SK-N-SH (cell line): ENCODE measurements at regions of chr2 and their contacts with region 1.

Region 1: GRCh38 chr2:219459460-219460311 is 25.0 kb downstream of the SPEG start:
- DNase-seq: peak; percentile 88
- H3K4me3 ChIP-seq: no peak overlapping the region
- H3K27ac ChIP-seq: peak overlapping the region; percentile 29 to 92; a peak in 3 of 4 replicates
- H3K4me1 ChIP-seq: peaks cover 17 to 27% of the 10 kb centered on the region in 2 experiments
- H3K27me3 ChIP-seq: no peaks in the 10 kb centered on the region
- CTCF ChIP-seq: peak; percentile 87
- EP300 ChIP-seq: no peak
- RAD21 ChIP-seq: peak; percentile 77

Region 2: DNA sequence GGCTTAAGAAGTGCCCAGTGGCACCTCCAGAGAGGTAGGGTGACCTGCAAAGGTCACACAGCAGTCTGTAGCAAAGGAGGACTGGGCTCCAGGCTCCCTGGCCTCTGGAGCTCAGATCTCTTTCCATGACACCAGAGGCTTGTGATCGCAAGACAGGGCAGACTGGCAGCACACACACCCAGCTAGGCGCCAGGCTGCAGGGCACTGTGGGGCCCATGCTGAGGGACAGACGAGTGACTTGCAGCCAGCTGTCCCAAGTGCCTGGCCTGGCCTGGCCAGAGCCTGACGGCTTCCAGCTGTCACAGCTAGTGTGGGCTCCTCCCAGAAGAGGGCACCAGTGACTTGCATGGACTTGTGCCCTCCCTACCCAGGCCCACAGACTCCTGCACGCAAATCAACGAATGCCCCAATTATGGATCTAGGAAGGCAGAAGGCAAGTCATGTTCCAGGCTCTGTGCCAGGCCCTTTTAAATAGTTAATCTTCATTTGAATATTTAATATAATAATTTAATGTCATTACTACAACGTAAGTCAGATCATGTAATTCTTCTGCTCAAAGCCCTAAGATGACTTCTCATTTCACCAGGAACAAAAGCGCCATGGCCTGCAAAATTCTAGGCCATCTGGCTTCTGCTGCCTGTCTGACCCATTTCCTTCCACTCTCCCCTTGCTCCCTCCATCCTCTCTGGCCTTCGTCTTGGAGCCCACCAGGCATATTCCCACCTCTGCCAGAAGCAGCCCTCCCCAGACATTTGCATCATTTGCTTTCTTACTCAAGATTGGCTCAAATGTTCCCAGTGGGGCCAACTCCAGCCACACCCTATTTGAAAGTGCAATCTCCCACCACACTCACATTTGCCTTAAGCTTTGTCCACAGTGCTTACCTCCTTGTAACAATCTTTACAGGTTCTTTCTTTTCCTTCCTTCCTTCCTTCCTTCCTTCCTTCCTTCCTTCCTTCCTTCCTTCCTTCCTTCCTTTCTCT is 28.8 kb before region 1 on chr2:
- CTCF ChIA-PET with region 1: interaction called, 95 read pairs
- POLR2A ChIA-PET with region 1: no interaction called
- DNase-seq: peak; percentile 89
- H3K4me3 ChIP-seq: no peak overlapping the region
- H3K27ac ChIP-seq: peak overlapping the region in 1 of 2 experiments; percentile 77; a peak in 2 of 4 replicates
- H3K4me1 ChIP-seq: peaks cover 0 to 13% of the 10 kb centered on the region in 2 experiments; a peak in 1 of 4 replicates
- H3K27me3 ChIP-seq: no peaks in the 10 kb centered on the region
- CTCF ChIP-seq: peak; percentile 50
- EP300 ChIP-seq: 0 out of 4 replicates have a peak, but pooled peaks of 1 of the 2 experiments have one; percentile 10
- RAD21 ChIP-seq: peak; percentile 85

Region 3: DNA sequence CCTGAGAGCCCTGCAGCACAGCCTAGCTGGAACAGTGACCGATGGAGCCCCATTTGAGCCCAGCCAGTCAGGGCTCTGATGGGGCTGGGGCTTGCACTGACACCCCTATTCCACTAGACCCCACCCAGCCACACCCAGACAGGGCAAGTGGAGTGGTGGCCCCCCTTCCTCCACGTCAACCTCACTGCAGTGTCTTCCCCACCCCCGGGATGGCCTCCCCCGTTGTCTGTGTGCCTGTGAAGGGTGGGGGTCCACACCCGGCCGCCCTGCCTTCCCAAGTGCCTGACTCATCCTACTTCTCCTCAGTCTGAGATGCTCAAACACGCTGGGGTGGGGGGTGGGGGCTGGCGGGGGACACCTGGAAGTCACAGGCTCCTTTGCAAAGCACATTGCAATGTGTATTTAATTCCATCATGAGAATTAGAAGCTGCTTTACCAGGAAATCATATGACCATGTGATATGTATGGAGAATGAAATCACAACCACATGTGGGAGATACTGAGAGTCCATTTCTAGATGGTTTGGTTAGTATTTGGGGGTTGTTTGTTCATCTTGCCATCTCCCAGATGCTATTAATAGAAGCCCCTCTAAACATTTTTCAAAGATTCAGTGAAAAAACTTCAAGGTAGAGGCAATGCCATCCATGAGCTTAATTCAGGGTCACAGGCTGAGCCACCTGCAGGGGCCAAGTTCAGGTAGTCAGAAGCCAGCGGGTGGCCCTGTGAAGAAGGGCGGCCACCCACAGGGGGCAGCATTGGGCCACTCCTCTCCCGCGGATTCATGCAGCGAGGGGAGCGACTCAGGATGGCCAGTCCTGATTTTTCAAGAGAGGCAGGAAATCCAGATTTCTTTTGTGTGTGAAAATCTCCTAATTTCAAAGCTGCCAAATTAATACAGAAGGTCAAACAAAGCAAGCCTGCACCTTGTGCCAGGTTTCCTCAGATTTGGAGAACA is 16.3 kb after region 1 on chr2:
- CTCF ChIA-PET with region 1: interaction called, 159 read pairs
- POLR2A ChIA-PET with region 1: interaction called, 8 read pairs
- DNase-seq: peak; percentile 94
- H3K4me3 ChIP-seq: no peak overlapping the region
- H3K27ac ChIP-seq: peak overlapping the region; percentile 36 to 74; a peak in 3 of 4 replicates
- H3K4me1 ChIP-seq: peaks cover 0 to 42% of the 10 kb centered on the region in 2 experiments; a peak in 1 of 4 replicates
- H3K27me3 ChIP-seq: no peaks in the 10 kb centered on the region
- CTCF ChIP-seq: peak; percentile 95
- EP300 ChIP-seq: no peak; a peak in 1 of 4 replicates
- RAD21 ChIP-seq: peak; percentile 91

Region 4: GRCh38 chr2:219509780-219510511 is 50.3 kb after region 1 on chr2:
- CTCF ChIA-PET with region 1: interaction called, 26 read pairs
- POLR2A ChIA-PET with region 1: interaction called, 6 read pairs
- DNase-seq: peak; percentile 83
- H3K4me3 ChIP-seq: peak overlapping the region; percentile 36 to 46; a peak in 3 of 4 replicates
- H3K27ac ChIP-seq: peak overlapping the region in 1 of 2 experiments; percentile 96; a peak in 2 of 4 replicates
- H3K4me1 ChIP-seq: peaks cover 3 to 99% of the 10 kb centered on the region in 2 experiments; a peak in 2 of 4 replicates
- H3K27me3 ChIP-seq: peaks cover 21% of the 10 kb centered on the region
- CTCF ChIP-seq: peak; percentile 76
- EP300 ChIP-seq: peak in 1 of 2 experiments; percentile 13; a peak in 1 of 4 replicates
- RAD21 ChIP-seq: peak; percentile 77

Region 5: DNA sequence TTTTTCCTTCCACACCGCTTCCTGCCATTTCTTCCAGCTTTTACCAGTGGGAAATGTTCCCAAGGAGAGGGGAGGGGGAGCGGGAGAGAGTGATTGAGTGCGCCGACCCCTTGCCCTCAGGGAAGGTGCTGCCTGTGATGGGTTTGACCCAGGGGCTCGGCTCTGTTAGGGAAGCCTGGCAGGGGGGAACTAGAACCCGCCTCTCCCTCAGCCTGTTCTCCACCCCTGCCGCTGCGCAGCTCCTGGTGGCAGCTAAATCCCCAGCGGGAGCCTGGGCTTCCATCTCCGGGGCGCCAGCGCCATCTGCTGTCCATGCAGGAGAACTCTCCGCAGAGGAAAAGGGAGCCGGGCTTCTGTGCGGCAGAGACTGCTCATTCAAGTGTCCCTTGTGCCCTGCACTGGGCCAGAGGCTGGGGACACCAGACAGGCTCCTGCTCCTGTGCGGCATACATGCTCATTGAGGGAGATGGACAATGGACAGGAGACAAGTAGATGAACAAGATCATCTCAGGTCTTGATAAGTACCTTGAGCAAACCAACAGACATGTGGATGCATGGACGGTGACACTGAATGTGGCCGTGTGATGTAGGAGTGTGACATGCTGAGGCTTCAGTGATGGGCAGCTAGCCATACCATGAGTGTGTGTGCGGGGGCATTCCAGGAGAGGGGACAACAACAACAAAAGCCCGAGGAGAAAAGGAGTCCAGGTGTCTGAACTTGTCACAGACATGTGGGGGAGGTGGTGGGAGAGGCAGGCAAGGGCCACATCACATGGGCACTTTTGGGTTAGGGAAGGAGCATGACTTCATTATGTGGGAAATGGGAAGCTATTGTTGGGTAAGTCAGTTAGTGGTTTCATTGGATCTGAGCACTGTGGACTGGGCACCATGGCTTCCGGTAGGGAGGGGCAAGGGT is 70.6 kb after region 1 on chr2:
- CTCF ChIA-PET with region 1: interaction called, 154 read pairs
- POLR2A ChIA-PET with region 1: interaction called, 15 read pairs
- DNase-seq: peak; percentile 93
- H3K4me3 ChIP-seq: peak overlapping the region; percentile 28 to 36; a peak in 3 of 4 replicates
- H3K27ac ChIP-seq: peak overlapping the region in 1 of 2 experiments; percentile 12; a peak in 1 of 4 replicates
- H3K4me1 ChIP-seq: peaks cover 0 to 38% of the 10 kb centered on the region in 2 experiments; a peak in 2 of 4 replicates
- H3K27me3 ChIP-seq: no peaks in the 10 kb centered on the region; the same call in 1 of the 2 replicates
- CTCF ChIP-seq: peak; percentile 91
- EP300 ChIP-seq: no peak
- RAD21 ChIP-seq: peak; percentile 99